ENCODE measurements at regions of chr1 and their contacts with region 1.

Region 1: DNA sequence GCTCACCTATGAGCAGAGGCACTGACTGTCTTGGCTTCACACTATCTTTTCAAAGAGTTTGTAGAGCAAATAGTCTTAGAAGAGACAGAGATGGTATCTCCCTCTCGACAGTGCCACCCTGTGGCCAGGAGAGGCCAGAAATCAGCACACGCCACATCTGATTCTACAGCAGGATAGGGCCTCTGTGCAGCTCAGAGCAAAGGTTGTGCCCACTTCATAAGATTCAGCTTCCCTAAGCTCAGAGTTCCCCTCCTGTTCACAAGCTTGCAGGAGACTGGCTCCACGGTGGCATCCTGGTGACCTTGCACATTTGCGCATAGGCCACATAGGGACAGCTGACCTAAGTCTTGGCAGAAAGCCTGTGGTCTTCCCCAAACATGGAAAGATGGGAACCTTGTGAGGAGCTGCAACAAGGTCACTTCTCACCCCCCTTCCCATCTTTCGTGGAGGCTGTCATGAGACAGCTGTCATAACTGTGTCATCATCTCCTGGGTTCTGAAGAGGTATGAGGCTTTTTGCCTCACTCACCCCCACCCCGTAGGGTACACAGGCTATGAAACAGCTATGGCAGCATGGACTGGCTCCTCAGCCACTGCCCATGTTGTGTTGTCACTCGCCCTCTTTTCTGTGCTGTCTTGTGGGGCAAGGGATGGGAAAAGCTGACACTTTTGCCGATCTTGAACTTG is 3.0 kb downstream of the ITLN2 start:
- DNase-seq: peak; percentile 83
- ATAC-seq: peak; percentile 92
- H3K4me3 Mint-ChIP-seq: no peak overlapping the region
- H3K27ac Mint-ChIP-seq: no peak overlapping the region
- H3K4me1 Mint-ChIP-seq: peaks cover 4% of the 10 kb centered on the region
- H3K27me3 Mint-ChIP-seq: no peaks in the 10 kb centered on the region

Region 2: GRCh38 chr1:160726498-160727315 is 224.9 kb before region 1 on chr1:
- CTCF ChIA-PET with region 1: interaction called, 66 read pairs
- DNase-seq: peak; percentile 83
- ATAC-seq: peak; percentile 75
- H3K4me3 Mint-ChIP-seq: no peak overlapping the region
- H3K27ac Mint-ChIP-seq: no peak overlapping the region
- H3K4me1 Mint-ChIP-seq: peaks cover 24% of the 10 kb centered on the region
- H3K27me3 Mint-ChIP-seq: no peaks in the 10 kb centered on the region

Region 3: DNA sequence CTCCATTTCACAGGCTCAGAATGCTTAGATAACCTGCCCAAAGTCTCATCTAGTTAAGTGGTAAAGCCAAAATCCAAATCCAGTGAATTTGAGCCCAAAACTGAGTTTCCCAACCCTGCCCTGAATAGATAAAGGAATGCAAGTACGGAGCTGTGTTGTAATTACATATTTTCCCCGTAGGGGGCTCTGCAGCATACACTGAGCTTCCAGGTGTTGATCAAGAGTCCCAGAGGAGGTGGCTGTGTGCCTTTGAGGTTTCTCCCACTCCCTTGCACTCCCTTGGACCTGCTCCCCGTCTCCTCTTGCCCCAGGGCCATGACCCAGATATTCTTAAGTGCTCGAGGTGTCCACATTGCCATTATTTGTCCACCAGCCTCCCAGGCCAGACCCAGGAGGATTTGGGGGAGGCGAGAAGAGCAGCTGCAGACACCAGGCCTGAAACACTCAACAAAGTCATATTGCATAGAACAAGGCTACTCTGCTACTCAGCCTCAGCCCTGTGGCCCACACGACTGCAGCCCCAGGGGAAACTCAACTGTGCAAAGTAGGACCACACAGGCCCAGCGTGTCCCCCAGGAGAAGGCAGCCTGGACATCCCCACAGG is 174.0 kb before region 1 on chr1:
- CTCF ChIA-PET with region 1: interaction called, 174 read pairs
- DNase-seq: peak; percentile 66
- ATAC-seq: peak; percentile 52
- H3K4me3 Mint-ChIP-seq: no peak overlapping the region
- H3K27ac Mint-ChIP-seq: peak overlapping the region; percentile 22
- H3K4me1 Mint-ChIP-seq: peaks cover 28% of the 10 kb centered on the region
- H3K27me3 Mint-ChIP-seq: no peaks in the 10 kb centered on the region

Region 4: GRCh38 chr1:160821628-160822027 is 130.0 kb before region 1 on chr1:
- CTCF ChIA-PET with region 1: interaction called, 42 read pairs
- DNase-seq: no peak
- ATAC-seq: no peak
- H3K4me3 Mint-ChIP-seq: no peak overlapping the region
- H3K27ac Mint-ChIP-seq: no peak overlapping the region
- H3K4me1 Mint-ChIP-seq: no peaks in the 10 kb centered on the region
- H3K27me3 Mint-ChIP-seq: no peaks in the 10 kb centered on the region

Region 5: GRCh38 chr1:160855181-160855981 is 96.2 kb before region 1 on chr1:
- CTCF ChIA-PET with region 1: interaction called, 56 read pairs
- DNase-seq: peak; percentile 85
- ATAC-seq: peak; percentile 83
- H3K4me3 Mint-ChIP-seq: no peak overlapping the region
- H3K27ac Mint-ChIP-seq: no peak overlapping the region
- H3K4me1 Mint-ChIP-seq: peaks cover 38% of the 10 kb centered on the region
- H3K27me3 Mint-ChIP-seq: no peaks in the 10 kb centered on the region

Region 6: GRCh38 chr1:160877221-160877620 is 74.4 kb before region 1 on chr1:
- CTCF ChIA-PET with region 1: interaction called, 17 read pairs
- DNase-seq: no peak
- ATAC-seq: peak; percentile 76
- H3K4me3 Mint-ChIP-seq: no peak overlapping the region
- H3K27ac Mint-ChIP-seq: peak overlapping the region; percentile 45
- H3K4me1 Mint-ChIP-seq: peaks cover 26% of the 10 kb centered on the region
- H3K27me3 Mint-ChIP-seq: no peaks in the 10 kb centered on the region

Region 7: GRCh38 chr1:161032409-161032808 is 80.8 kb after region 1 on chr1:
- CTCF ChIA-PET with region 1: no interaction called
- DNase-seq: no peak
- ATAC-seq: no peak
- H3K4me3 Mint-ChIP-seq: no peak overlapping the region
- H3K27ac Mint-ChIP-seq: no peak overlapping the region
- H3K4me1 Mint-ChIP-seq: peaks cover 17% of the 10 kb centered on the region
- H3K27me3 Mint-ChIP-seq: no peaks in the 10 kb centered on the region

Region 8: GRCh38 chr1:161801955-161802354 is 850.4 kb after region 1 on chr1:
- CTCF ChIA-PET with region 1: no interaction called
- DNase-seq: no peak
- ATAC-seq: no peak
- H3K4me3 Mint-ChIP-seq: no peak overlapping the region
- H3K27ac Mint-ChIP-seq: no peak overlapping the region
- H3K4me1 Mint-ChIP-seq: no peaks in the 10 kb centered on the region
- H3K27me3 Mint-ChIP-seq: no peaks in the 10 kb centered on the region